PC-3 (cell line): ENCODE measurements at regions of chr20 and their contacts with region 1.

Region 1: DNA sequence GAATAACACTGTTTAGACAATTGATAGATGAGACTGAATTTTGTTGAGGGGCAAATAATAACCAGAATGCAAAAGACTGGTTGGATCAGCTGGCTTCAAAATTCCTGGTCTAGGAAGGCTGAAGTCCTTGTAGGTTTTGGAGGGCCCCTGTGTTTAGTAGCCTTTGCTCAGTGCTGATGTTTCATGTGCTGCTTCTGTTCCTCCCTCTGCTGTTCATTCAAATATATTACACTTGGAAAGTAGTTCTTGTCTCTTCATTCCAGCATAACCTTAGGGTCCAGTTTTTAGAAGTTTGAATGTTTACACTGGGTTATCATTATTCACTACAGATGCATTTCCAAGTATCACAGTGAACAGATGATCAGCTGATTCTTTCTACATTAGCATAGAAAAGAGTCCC is 72.5 kb downstream of the FLRT3 start:
- DNase-seq: peak; percentile 53
- ATAC-seq: peak; percentile 79
- H3K4me3 ChIP-seq: no peak overlapping the region
- H3K27ac ChIP-seq: no peak overlapping the region
- H3K4me1 ChIP-seq: 0 out of 2 replicates have a peak, but pooled peaks cover 2% of the 10 kb centered on the region
- H3K27me3 ChIP-seq: no peaks in the 10 kb centered on the region
- CTCF ChIP-seq: peak; percentile 70

Region 2: GRCh38 chr20:14142171-14142570 is 122.7 kb before region 1 on chr20:
- CTCF ChIA-PET with region 1: no interaction called
- POLR2A ChIA-PET with region 1: no interaction called
- intact Hi-C with region 1: loop called (anchors 1 kb)
- DNase-seq: peak; percentile 75
- ATAC-seq: peak; percentile 93
- H3K4me3 ChIP-seq: no peak overlapping the region
- H3K27ac ChIP-seq: no peak overlapping the region
- H3K4me1 ChIP-seq: no peaks in the 10 kb centered on the region
- H3K27me3 ChIP-seq: no peaks in the 10 kb centered on the region
- CTCF ChIP-seq: peak; percentile 81

Region 3: GRCh38 chr20:14189794-14190402 is 75.0 kb before region 1 on chr20:
- CTCF ChIA-PET with region 1: interaction called, 3 read pairs
- POLR2A ChIA-PET with region 1: no interaction called
- intact Hi-C with region 1: loop called (anchors 1 kb)
- DNase-seq: peak; percentile 74
- ATAC-seq: peak; percentile 86
- H3K4me3 ChIP-seq: no peak overlapping the region
- H3K27ac ChIP-seq: no peak overlapping the region
- H3K4me1 ChIP-seq: 0 out of 2 replicates have a peak, but pooled peaks cover 7% of the 10 kb centered on the region
- H3K27me3 ChIP-seq: no peaks in the 10 kb centered on the region
- CTCF ChIP-seq: peak; percentile 93